Posterior vena cava (tissue), 2 donors: ENCODE measurements at regions of chr18 and their contacts with region 1.

Region 1: DNA sequence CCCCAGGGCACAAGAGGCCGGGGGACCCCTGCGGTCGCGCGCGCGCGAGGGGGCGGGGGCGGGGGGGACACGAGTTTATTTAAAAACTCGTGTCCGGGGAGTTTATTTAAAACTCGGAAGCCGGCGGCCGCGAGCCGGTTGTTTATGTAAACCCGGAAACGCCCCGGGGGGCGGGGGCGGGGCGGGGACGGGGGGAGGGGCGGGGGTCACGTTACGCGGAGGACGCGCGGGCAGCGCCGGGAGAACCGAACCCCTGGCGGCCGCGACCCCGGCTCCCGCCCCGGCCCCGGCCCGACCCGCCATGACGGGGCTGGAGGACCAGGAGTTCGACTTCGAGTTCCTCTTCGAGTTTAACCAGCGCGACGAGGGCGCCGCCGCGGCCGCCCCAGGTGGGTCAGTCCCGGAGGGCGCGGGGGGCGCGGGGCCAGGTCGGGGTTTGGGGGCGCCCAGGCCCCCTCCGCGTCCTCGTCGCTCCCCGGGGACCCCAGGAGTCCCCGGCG is 4.4 kb downstream of the NFATC1 start:
- DNase-seq: peak; percentile 92

Region 2: DNA sequence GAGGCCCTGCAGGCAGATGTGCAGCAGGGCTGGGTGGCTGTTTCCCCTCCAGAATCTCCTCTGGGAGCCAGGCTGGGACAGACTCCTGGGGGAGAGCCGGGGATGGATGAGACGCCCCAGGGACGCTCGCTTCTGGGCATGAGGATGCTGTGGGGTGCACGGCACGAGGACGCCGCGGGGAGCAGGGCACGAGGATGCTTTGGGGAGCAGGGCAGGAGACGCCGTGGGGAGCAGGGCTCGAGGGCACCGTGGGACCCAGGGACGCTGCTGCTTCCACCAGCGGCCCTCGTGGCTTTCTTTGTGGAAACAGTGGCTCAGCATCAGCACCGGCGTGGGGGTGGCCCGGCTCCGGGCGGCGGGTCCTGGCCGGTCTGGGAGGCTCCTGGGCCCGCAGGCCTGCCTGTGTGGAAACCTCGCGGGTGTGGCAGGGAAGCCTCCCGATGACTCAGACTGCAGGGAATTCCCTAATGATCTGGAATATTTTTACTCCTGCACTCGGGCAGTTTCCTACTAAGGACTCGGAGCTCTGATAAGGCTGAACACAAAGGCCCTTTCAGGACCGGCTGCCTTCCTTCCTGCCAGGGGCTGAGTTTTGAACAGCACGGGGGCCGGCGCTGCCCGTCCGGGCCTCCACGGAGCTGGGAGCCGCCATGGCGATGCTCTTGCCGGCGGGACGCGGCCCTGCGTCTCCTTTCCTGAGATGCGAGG is 58.1 kb after region 1 on chr18:
- intact Hi-C with region 1: loop called (anchors 5 to 10 kb)
- DNase-seq: peak; percentile 94